CD8-positive, alpha-beta T cell (primary cell): ENCODE measurements at regions of chr4 and their contacts with region 1.

Region 1: GRCh38 chr4:102344954-102345794 is at the start of gene SLC39A8:
- DNase-seq: peak; percentile 67 to 94 (median 84)
- ATAC-seq: peak; percentile 80
- H3K4me3 ChIP-seq: peak within 1 kb of the TSS; percentile 65 to 85
- H3K4me3 Mint-ChIP-seq: peak within 1 kb of the TSS; percentile 92
- H3K27ac ChIP-seq: peak within 1 kb of the TSS; percentile 92 to 96
- H3K27ac Mint-ChIP-seq: peak within 1 kb of the TSS; percentile 96
- H3K4me1 ChIP-seq: peaks cover 33% of the 10 kb centered on the region
- H3K4me1 Mint-ChIP-seq: peaks cover 54% of the 10 kb centered on the region
- H3K27me3 ChIP-seq: no peaks in the 10 kb centered on the region
- H3K27me3 Mint-ChIP-seq: no peaks in the 10 kb centered on the region
- CTCF ChIP-seq: peak; percentile 90
- total RNA-seq, gene SLC39A8: 19.1 to 20.0 TPM

Region 2: GRCh38 chr4:101439926-101440325 is 905.2 kb before region 1 on chr4:
- CTCF ChIA-PET with region 1: no interaction called
- POLR2A ChIA-PET with region 1: no interaction called
- intact Hi-C with region 1: no loop called
- DNase-seq: no peak
- ATAC-seq: no peak
- H3K4me3 ChIP-seq: no peak overlapping the region
- H3K4me3 Mint-ChIP-seq: no peak overlapping the region
- H3K27ac ChIP-seq: no peak overlapping the region
- H3K27ac Mint-ChIP-seq: no peak overlapping the region
- H3K4me1 ChIP-seq: no peaks in the 10 kb centered on the region
- H3K4me1 Mint-ChIP-seq: no peaks in the 10 kb centered on the region
- H3K27me3 ChIP-seq: no peaks in the 10 kb centered on the region
- H3K27me3 Mint-ChIP-seq: peaks cover 20% of the 10 kb centered on the region
- CTCF ChIP-seq: no peak

Region 3: DNA sequence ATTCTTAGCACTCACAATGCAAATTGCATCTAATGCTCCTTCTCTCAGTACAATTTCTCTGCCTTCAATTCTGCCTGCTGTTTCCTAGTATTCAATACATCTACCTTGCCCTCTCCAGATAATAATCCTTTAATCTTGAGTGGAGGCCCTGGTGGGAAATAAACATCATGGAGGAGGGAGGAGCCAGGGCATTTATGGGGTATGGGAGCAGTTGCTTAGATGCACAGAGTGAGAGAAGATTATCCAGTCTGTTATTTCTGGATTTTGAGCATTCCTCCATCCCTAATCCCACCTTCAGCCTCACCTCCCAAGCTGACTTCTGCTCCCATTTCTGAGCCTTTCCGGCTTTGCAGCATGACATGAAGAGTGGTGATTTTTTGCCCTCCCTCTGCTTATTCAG is 869.9 kb before region 1 on chr4:
- CTCF ChIA-PET with region 1: no interaction called
- POLR2A ChIA-PET with region 1: no interaction called
- intact Hi-C with region 1: no loop called
- DNase-seq: no peak
- ATAC-seq: no peak
- H3K4me3 ChIP-seq: no peak overlapping the region
- H3K4me3 Mint-ChIP-seq: no peak overlapping the region
- H3K27ac ChIP-seq: no peak overlapping the region
- H3K27ac Mint-ChIP-seq: no peak overlapping the region
- H3K4me1 ChIP-seq: no peaks in the 10 kb centered on the region
- H3K4me1 Mint-ChIP-seq: no peaks in the 10 kb centered on the region
- H3K27me3 ChIP-seq: no peaks in the 10 kb centered on the region
- H3K27me3 Mint-ChIP-seq: peaks cover 3% of the 10 kb centered on the region
- CTCF ChIP-seq: no peak

Region 4: GRCh38 chr4:102299354-102300107 is 45.6 kb before region 1 on chr4:
- CTCF ChIA-PET with region 1: interaction called, 4 read pairs
- POLR2A ChIA-PET with region 1: no interaction called
- intact Hi-C with region 1: loop called in 1 of 2 experiments (anchors 2 kb)
- DNase-seq: peak in 7 of 9 experiments; percentile 2 to 53 (median 27)
- ATAC-seq: peak; percentile 67
- H3K4me3 ChIP-seq: no peak overlapping the region
- H3K4me3 Mint-ChIP-seq: no peak overlapping the region
- H3K27ac ChIP-seq: no peak overlapping the region
- H3K27ac Mint-ChIP-seq: no peak overlapping the region
- H3K4me1 ChIP-seq: no peaks in the 10 kb centered on the region
- H3K4me1 Mint-ChIP-seq: peaks cover 2% of the 10 kb centered on the region
- H3K27me3 ChIP-seq: no peaks in the 10 kb centered on the region
- H3K27me3 Mint-ChIP-seq: no peaks in the 10 kb centered on the region
- CTCF ChIP-seq: peak; percentile 66

Region 5: GRCh38 chr4:102610007-102610406 is 264.8 kb after region 1 on chr4:
- CTCF ChIA-PET with region 1: interaction called, 3 read pairs
- POLR2A ChIA-PET with region 1: no interaction called
- intact Hi-C with region 1: loop called in 1 of 2 experiments (anchors 5 kb)
- DNase-seq: peak in 1 of 9 experiments; percentile 41
- ATAC-seq: no peak
- H3K4me3 ChIP-seq: no peak overlapping the region
- H3K4me3 Mint-ChIP-seq: no peak overlapping the region
- H3K27ac ChIP-seq: peak overlapping the region in 1 of 2 experiments; percentile 90
- H3K27ac Mint-ChIP-seq: peak overlapping the region; percentile 39
- H3K4me1 ChIP-seq: peaks cover 67% of the 10 kb centered on the region
- H3K4me1 Mint-ChIP-seq: peaks cover 78% of the 10 kb centered on the region
- H3K27me3 ChIP-seq: no peaks in the 10 kb centered on the region
- H3K27me3 Mint-ChIP-seq: no peaks in the 10 kb centered on the region
- CTCF ChIP-seq: no peak

Region 6: DNA sequence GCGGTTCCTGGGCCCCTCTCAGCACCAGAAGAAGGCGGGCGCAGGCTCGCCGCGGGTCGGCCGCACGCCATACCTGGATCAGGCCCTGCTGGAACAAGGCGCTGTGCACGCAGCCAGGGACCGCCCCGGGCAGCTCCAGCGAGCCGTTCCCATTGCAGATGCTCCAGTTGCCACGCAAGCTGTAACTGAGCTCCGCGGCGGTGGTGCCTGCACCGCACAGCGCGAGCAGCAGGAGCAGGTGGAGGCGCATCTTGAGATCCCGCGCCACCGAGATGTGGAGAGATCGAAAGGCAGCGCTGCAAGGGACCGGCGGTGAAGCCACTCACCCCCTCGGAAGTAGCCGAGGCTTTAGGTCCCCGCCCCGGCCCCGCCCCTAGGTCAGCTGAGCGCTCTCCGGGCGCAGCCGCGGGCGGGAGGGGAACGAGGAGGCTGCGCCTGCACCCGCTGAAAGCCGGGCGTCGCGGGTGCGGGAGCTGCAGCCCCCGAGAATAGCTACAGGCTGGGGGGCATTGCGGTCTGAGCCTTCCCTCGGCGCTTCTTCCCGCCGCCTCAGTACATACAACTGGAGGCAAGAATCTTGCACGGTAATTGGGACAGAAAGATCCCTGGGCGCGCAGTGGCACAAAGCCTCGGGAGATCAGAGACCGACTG is 415.6 kb after region 1 on chr4 and contains the start of gene MANBA:
- CTCF ChIA-PET with region 1: no interaction called
- POLR2A ChIA-PET with region 1: interaction called, 3 read pairs
- intact Hi-C with region 1: loop called in 1 of 2 experiments (anchors 5 kb)
- DNase-seq: peak; percentile 67 to 90 (median 84)
- ATAC-seq: peak; percentile 83
- H3K4me3 ChIP-seq: peak within 1 kb of the TSS; percentile 88 to 93
- H3K4me3 Mint-ChIP-seq: peak within 1 kb of the TSS; percentile 96
- H3K27ac ChIP-seq: peak within 1 kb of the TSS; percentile 62 to 65
- H3K27ac Mint-ChIP-seq: peak within 1 kb of the TSS; percentile 94
- H3K4me1 ChIP-seq: peaks cover 10% of the 10 kb centered on the region
- H3K4me1 Mint-ChIP-seq: peaks cover 42% of the 10 kb centered on the region
- H3K27me3 ChIP-seq: no peaks in the 10 kb centered on the region
- H3K27me3 Mint-ChIP-seq: no peaks in the 10 kb centered on the region
- CTCF ChIP-seq: no peak
- total RNA-seq, gene MANBA: 22.5 to 24.1 TPM

Region 7: GRCh38 chr4:103008875-103009729 is 663.9 kb after region 1 on chr4:
- CTCF ChIA-PET with region 1: interaction called, 5 read pairs
- POLR2A ChIA-PET with region 1: no interaction called
- intact Hi-C with region 1: loop called in 1 of 2 experiments (anchors 2 kb)
- DNase-seq: peak in 3 of 9 experiments; percentile 19 to 82 (median 75)
- ATAC-seq: peak; percentile 97
- H3K4me3 ChIP-seq: no peak overlapping the region
- H3K4me3 Mint-ChIP-seq: no peak overlapping the region
- H3K27ac ChIP-seq: no peak overlapping the region
- H3K27ac Mint-ChIP-seq: no peak overlapping the region
- H3K4me1 ChIP-seq: no peaks in the 10 kb centered on the region
- H3K4me1 Mint-ChIP-seq: peaks cover 2% of the 10 kb centered on the region
- H3K27me3 ChIP-seq: no peaks in the 10 kb centered on the region
- H3K27me3 Mint-ChIP-seq: no peaks in the 10 kb centered on the region
- CTCF ChIP-seq: peak; percentile 85

Region 8: GRCh38 chr4:103075901-103076739 is 730.9 kb after region 1 on chr4:
- CTCF ChIA-PET with region 1: no interaction called
- POLR2A ChIA-PET with region 1: no interaction called
- intact Hi-C with region 1: loop called in 1 of 2 experiments (anchors 5 kb)
- DNase-seq: peak; percentile 39 to 84 (median 64)
- ATAC-seq: peak; percentile 79
- H3K4me3 ChIP-seq: peak overlapping the region; percentile 80
- H3K4me3 Mint-ChIP-seq: peak overlapping the region; percentile 94
- H3K27ac ChIP-seq: peak overlapping the region; percentile 89 to 95
- H3K27ac Mint-ChIP-seq: peak overlapping the region; percentile 99
- H3K4me1 ChIP-seq: peaks cover 25% of the 10 kb centered on the region
- H3K4me1 Mint-ChIP-seq: peaks cover 49% of the 10 kb centered on the region
- H3K27me3 ChIP-seq: no peaks in the 10 kb centered on the region
- H3K27me3 Mint-ChIP-seq: no peaks in the 10 kb centered on the region
- CTCF ChIP-seq: no peak

Region 9: GRCh38 chr4:103198111-103198765 is 853.1 kb after region 1 on chr4 and contains the start of gene CENPE:
- CTCF ChIA-PET with region 1: no interaction called
- POLR2A ChIA-PET with region 1: no interaction called
- intact Hi-C with region 1: loop called (anchors 1 to 10 kb)
- DNase-seq: peak; percentile 76 to 92 (median 84)
- ATAC-seq: peak; percentile 84
- H3K4me3 ChIP-seq: peak within 1 kb of the TSS; percentile 72 to 81
- H3K4me3 Mint-ChIP-seq: peak within 1 kb of the TSS; percentile 98
- H3K27ac ChIP-seq: peak within 1 kb of the TSS; percentile 85 to 87
- H3K27ac Mint-ChIP-seq: peak within 1 kb of the TSS; percentile 99
- H3K4me1 ChIP-seq: peaks cover 11% of the 10 kb centered on the region
- H3K4me1 Mint-ChIP-seq: peaks cover 12% of the 10 kb centered on the region
- H3K27me3 ChIP-seq: no peaks in the 10 kb centered on the region
- H3K27me3 Mint-ChIP-seq: no peaks in the 10 kb centered on the region
- CTCF ChIP-seq: no peak
- total RNA-seq, gene CENPE: 0.97 to 3.1 TPM